ENCODE measurements at regions of chr6 and their contacts with region 1.

Region 1: GRCh38 chr6:62999796-63000195 is 211.5 kb upstream of the FKBP1C start:
- DNase-seq: no peak
- ATAC-seq: no peak
- H3K4me3 ChIP-seq: no peak overlapping the region
- H3K27ac ChIP-seq: no peak overlapping the region
- H3K4me1 ChIP-seq: no peaks in the 10 kb centered on the region
- H3K27me3 ChIP-seq: no peaks in the 10 kb centered on the region
- CTCF ChIP-seq: no peak
- POLR2A ChIP-seq: no peak

Region 2: DNA sequence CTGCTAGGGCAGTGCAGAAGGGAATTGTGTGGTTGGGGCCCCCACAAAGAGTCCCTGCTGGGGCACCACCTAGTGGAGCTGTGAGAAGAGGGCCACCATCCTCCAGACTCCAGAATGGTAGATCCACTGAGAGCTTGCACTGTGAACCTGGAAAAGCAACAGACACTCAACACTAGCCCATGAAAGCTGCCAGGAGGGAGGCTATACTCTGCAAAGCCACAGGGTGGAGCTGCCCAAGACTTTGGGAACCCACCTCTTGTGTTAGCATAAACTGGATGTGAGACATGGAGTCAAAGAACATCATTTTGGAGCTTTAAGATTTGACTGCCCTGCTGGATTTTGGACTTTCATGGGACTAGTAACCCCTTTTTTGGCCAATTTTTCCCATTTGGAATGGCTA is 385.4 kb before region 1 on chr6:
- in situ Hi-C with region 1: no loop called
- intact Hi-C with region 1: no loop called
- DNase-seq: no peak
- ATAC-seq: no peak
- H3K4me3 ChIP-seq: no peak overlapping the region
- H3K27ac ChIP-seq: no peak overlapping the region
- H3K4me1 ChIP-seq: no peaks in the 10 kb centered on the region
- H3K27me3 ChIP-seq: no peaks in the 10 kb centered on the region
- CTCF ChIP-seq: no peak
- POLR2A ChIP-seq: no peak

Region 3: GRCh38 chr6:64197246-64197645 is 1197.5 kb after region 1 on chr6:
- in situ Hi-C with region 1: no loop called
- intact Hi-C with region 1: loop called (anchors 10 kb)
- DNase-seq: no peak
- ATAC-seq: no peak
- H3K4me3 ChIP-seq: no peak overlapping the region
- H3K27ac ChIP-seq: no peak overlapping the region
- H3K4me1 ChIP-seq: no peaks in the 10 kb centered on the region
- H3K27me3 ChIP-seq: no peaks in the 10 kb centered on the region
- CTCF ChIP-seq: no peak
- POLR2A ChIP-seq: no peak